ENCODE measurements at regions of chr2 and their contacts with region 1.

Region 1: GRCh38 chr2:136135921-136136906 is 18.3 kb upstream of the CXCR4 start:
- DNase-seq: peak; percentile 67 to 95 (median 94)
- H3K4me3 ChIP-seq: peak overlapping the region; percentile 35
- H3K4me3 Mint-ChIP-seq: peak overlapping the region; percentile 58 to 84 (median 76)
- H3K27ac ChIP-seq: peak overlapping the region; percentile 85
- H3K27ac Mint-ChIP-seq: peak overlapping the region; percentile 98 to 100 (median 99)
- H3K4me1 ChIP-seq: peaks cover 97% of the 10 kb centered on the region
- H3K4me1 Mint-ChIP-seq: peaks cover 87 to 97% (median 97%) of the 10 kb centered on the region in 3 donors
- H3K27me3 ChIP-seq: no peaks in the 10 kb centered on the region
- H3K27me3 Mint-ChIP-seq: peaks cover 0 to 8% of the 10 kb centered on the region in 2 donors

Region 2: DNA sequence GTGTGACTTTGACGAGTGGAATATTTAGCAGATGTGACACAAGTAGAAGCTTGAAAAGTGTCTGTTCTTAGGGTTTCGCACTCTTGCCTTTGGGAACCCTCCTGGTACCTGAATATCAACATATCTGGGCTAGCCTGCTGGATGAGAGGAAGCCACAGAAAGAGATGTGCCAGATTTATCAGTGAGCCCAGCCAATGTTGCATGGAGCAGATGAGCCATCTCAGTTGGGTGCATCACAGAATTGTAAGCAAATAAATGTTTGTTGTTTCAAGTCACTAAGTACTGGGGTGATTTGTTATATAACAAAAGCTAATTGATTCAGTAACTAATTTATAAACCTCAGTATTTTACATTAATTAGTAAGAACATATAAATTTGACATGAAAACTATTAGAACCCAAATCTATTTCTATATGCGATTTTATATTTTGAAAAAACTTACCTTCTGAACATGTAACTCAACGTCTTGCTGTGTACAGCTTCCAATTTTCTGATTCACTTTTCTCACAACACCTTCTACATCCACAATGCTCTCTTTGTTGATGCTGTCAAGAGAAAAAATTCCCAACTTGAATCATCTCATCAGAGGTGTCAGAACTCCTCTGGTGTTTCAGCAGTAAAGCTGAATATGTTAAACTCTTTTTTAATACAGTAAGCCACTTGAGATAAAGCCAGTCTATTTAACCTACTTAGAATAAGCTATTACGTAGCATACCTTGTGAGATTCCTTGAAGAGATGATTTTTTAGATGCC is 193.1 kb before region 1 on chr2:
- CTCF ChIA-PET with region 1: no interaction called
- POLR2A ChIA-PET with region 1: no interaction called
- DNase-seq: no peak
- H3K4me3 ChIP-seq: no peak overlapping the region
- H3K4me3 Mint-ChIP-seq: no peak overlapping the region
- H3K27ac ChIP-seq: no peak overlapping the region
- H3K27ac Mint-ChIP-seq: peak overlapping the region in 2 of 8 donors; percentile 11 to 50
- H3K4me1 ChIP-seq: peaks cover 4% of the 10 kb centered on the region
- H3K4me1 Mint-ChIP-seq: peaks cover 35 to 61% (median 60%) of the 10 kb centered on the region in 3 donors
- H3K27me3 ChIP-seq: no peaks in the 10 kb centered on the region
- H3K27me3 Mint-ChIP-seq: no peaks in the 10 kb centered on the region

Region 3: DNA sequence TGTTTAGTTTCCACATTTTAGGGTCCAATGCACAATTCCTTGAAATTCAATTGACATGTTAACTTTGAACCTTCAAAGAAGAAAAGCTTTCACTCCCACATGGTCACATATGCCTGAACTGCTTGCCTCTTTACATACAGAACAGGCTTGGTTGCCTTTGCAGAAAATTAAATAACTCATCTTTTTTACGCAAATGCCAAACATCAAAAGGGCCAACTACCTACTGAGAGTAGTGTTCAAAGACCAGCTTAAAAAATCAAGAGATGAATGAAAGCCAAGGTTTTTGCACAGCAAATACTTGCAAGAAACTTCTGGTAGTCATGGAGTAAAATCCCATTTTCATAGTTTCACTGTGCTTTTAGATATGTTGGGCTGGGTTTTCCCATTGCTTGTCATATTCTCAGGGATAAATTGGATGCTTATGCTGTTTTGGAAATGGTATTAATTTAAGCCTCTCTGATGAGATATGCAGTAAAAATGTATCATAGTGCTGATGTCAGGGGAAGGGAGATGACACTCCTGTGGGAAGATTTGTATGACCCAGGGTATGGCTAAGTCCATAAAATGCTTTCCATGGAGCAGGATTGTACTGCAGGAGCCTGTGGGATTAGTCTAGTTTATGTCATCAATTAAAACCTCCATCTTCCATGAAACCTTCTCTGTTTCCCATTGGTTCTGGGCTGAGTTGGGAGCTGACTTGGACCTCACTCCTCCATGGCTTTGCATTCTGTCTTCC is 90.2 kb before region 1 on chr2:
- CTCF ChIA-PET with region 1: no interaction called
- POLR2A ChIA-PET with region 1: no interaction called
- DNase-seq: no peak
- H3K4me3 ChIP-seq: no peak overlapping the region
- H3K4me3 Mint-ChIP-seq: no peak overlapping the region
- H3K27ac ChIP-seq: no peak overlapping the region
- H3K27ac Mint-ChIP-seq: no peak overlapping the region
- H3K4me1 ChIP-seq: peaks cover 25% of the 10 kb centered on the region
- H3K4me1 Mint-ChIP-seq: peaks cover 22 to 24% (median 22%) of the 10 kb centered on the region in 3 donors
- H3K27me3 ChIP-seq: no peaks in the 10 kb centered on the region
- H3K27me3 Mint-ChIP-seq: no peaks in the 10 kb centered on the region

Region 4: GRCh38 chr2:136091899-136092421 is 44.3 kb before region 1 on chr2:
- CTCF ChIA-PET with region 1: no interaction called
- POLR2A ChIA-PET with region 1: no interaction called
- DNase-seq: peak in 1 of 5 donors; percentile 11
- H3K4me3 ChIP-seq: no peak overlapping the region
- H3K4me3 Mint-ChIP-seq: no peak overlapping the region
- H3K27ac ChIP-seq: no peak overlapping the region
- H3K27ac Mint-ChIP-seq: peak overlapping the region in 6 of 8 donors; percentile 14 to 76 (median 50)
- H3K4me1 ChIP-seq: no peaks in the 10 kb centered on the region
- H3K4me1 Mint-ChIP-seq: peaks cover 3 to 22% (median 11%) of the 10 kb centered on the region in 3 donors
- H3K27me3 ChIP-seq: no peaks in the 10 kb centered on the region
- H3K27me3 Mint-ChIP-seq: no peaks in the 10 kb centered on the region

Region 5: GRCh38 chr2:136117909-136118818 is 18.1 kb before region 1 on chr2 and contains the start of gene CXCR4:
- CTCF ChIA-PET with region 1: interaction called, 17 read pairs
- POLR2A ChIA-PET with region 1: interaction called, 131 read pairs
- DNase-seq: peak; percentile 82 to 97 (median 89)
- H3K4me3 ChIP-seq: peak within 1 kb of the TSS; percentile 87
- H3K4me3 Mint-ChIP-seq: peak within 1 kb of the TSS; percentile 93 to 100 (median 98)
- H3K27ac ChIP-seq: peak within 1 kb of the TSS; percentile 98
- H3K27ac Mint-ChIP-seq: peak within 1 kb of the TSS; percentile 98 to 100 (median 99)
- H3K4me1 ChIP-seq: peaks cover 47% of the 10 kb centered on the region
- H3K4me1 Mint-ChIP-seq: peaks cover 58 to 67% (median 65%) of the 10 kb centered on the region in 3 donors
- H3K27me3 ChIP-seq: no peaks in the 10 kb centered on the region
- H3K27me3 Mint-ChIP-seq: peaks cover 0 to 30% of the 10 kb centered on the region in 2 donors
- total RNA-seq, gene CXCR4: 102 to 106 TPM

Region 6: GRCh38 chr2:136238286-136239078 is 102.3 kb after region 1 on chr2:
- CTCF ChIA-PET with region 1: interaction called, 12 read pairs
- POLR2A ChIA-PET with region 1: interaction called, 37 read pairs
- DNase-seq: peak; percentile 38 to 82 (median 71)
- H3K4me3 ChIP-seq: peak overlapping the region; percentile 27
- H3K4me3 Mint-ChIP-seq: peak overlapping the region in 6 of 7 donors; percentile 2 to 55 (median 26)
- H3K27ac ChIP-seq: peak overlapping the region; percentile 68
- H3K27ac Mint-ChIP-seq: peak overlapping the region; percentile 80 to 99 (median 93)
- H3K4me1 ChIP-seq: peaks cover 45% of the 10 kb centered on the region
- H3K4me1 Mint-ChIP-seq: peaks cover 56 to 82% (median 63%) of the 10 kb centered on the region in 3 donors
- H3K27me3 ChIP-seq: no peaks in the 10 kb centered on the region
- H3K27me3 Mint-ChIP-seq: no peaks in the 10 kb centered on the region

Region 7: GRCh38 chr2:136327162-136327852 is 191.1 kb after region 1 on chr2:
- CTCF ChIA-PET with region 1: no interaction called
- POLR2A ChIA-PET with region 1: interaction called, 11 read pairs
- DNase-seq: peak; percentile 66 to 91 (median 89)
- H3K4me3 ChIP-seq: peak overlapping the region; percentile 52
- H3K4me3 Mint-ChIP-seq: peak overlapping the region; percentile 46 to 87 (median 81)
- H3K27ac ChIP-seq: peak overlapping the region; percentile 71
- H3K27ac Mint-ChIP-seq: peak overlapping the region; percentile 96 to 99 (median 96)
- H3K4me1 ChIP-seq: peaks cover 35% of the 10 kb centered on the region
- H3K4me1 Mint-ChIP-seq: peaks cover 29 to 67% (median 60%) of the 10 kb centered on the region in 3 donors
- H3K27me3 ChIP-seq: no peaks in the 10 kb centered on the region
- H3K27me3 Mint-ChIP-seq: no peaks in the 10 kb centered on the region

Region 8: GRCh38 chr2:136375017-136375901 is 239.0 kb after region 1 on chr2:
- CTCF ChIA-PET with region 1: interaction called, 3 read pairs
- POLR2A ChIA-PET with region 1: interaction called, 10 read pairs
- DNase-seq: no peak
- H3K4me3 ChIP-seq: no peak overlapping the region
- H3K4me3 Mint-ChIP-seq: peak overlapping the region in 1 of 7 donors; percentile 19
- H3K27ac ChIP-seq: no peak overlapping the region
- H3K27ac Mint-ChIP-seq: peak overlapping the region in 7 of 8 donors; percentile 1 to 92 (median 38)
- H3K4me1 ChIP-seq: peaks cover 21% of the 10 kb centered on the region
- H3K4me1 Mint-ChIP-seq: peaks cover 24 to 50% (median 45%) of the 10 kb centered on the region in 3 donors
- H3K27me3 ChIP-seq: no peaks in the 10 kb centered on the region
- H3K27me3 Mint-ChIP-seq: peaks cover 0 to 3% of the 10 kb centered on the region in 2 donors